Activated CD8-positive, alpha-beta T cell treated with anti-CD3 and anti-CD28 coated beads, Interleukin-2, amount 10 ng/mL, durations not matched to agents 7 days and 5 days (primary cell): ENCODE measurements at regions of chr17 and their contacts with region 1.

Region 1: DNA sequence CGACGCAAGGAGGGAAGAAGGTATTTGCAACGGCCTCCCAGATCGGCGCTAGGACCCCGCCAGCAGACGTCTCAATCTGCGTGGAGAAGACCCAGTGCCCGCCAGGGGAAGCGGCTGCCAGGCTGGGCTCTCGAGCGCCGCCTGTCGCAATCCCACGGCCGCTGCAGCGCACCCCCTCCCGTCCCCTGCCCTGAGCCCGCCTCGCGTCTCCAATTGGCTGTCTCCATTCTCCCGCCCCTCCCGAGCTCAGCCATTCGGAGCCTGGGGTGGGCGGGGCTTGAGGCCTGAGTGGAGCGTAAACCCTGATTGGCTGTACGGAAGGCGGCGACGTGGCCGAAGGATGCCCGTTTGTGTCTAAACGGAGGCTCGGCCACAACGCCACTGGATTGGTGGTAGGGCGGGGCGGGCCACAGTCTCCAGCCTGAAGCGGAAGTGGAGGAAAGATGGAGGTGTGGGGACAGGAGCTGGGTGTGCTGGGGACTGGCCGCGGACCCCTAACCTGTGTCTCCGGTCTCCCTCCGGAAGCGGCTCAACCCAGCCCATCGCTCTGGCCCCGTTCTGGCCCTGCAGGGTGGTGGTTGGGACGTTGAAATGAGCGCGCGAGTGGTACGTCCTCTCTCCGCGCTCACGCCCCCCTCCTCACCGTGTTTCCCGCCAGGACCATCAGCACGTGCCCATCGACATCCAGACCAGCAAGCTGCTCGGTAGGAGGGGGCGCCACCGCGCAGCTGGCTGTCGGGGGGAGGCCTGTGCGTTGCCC is at the start of gene CDK5RAP3:
- DNase-seq: peak; percentile 100
- ATAC-seq: peak; percentile 99
- H3K4me3 Mint-ChIP-seq: peak within 1 kb of the TSS; percentile 92
- H3K27ac Mint-ChIP-seq: peak within 1 kb of the TSS; percentile 91
- H3K4me1 Mint-ChIP-seq: peaks cover 27% of the 10 kb centered on the region
- H3K27me3 Mint-ChIP-seq: no peaks in the 10 kb centered on the region
- total RNA-seq, gene CDK5RAP3: 186 to 196 TPM

Region 2: DNA sequence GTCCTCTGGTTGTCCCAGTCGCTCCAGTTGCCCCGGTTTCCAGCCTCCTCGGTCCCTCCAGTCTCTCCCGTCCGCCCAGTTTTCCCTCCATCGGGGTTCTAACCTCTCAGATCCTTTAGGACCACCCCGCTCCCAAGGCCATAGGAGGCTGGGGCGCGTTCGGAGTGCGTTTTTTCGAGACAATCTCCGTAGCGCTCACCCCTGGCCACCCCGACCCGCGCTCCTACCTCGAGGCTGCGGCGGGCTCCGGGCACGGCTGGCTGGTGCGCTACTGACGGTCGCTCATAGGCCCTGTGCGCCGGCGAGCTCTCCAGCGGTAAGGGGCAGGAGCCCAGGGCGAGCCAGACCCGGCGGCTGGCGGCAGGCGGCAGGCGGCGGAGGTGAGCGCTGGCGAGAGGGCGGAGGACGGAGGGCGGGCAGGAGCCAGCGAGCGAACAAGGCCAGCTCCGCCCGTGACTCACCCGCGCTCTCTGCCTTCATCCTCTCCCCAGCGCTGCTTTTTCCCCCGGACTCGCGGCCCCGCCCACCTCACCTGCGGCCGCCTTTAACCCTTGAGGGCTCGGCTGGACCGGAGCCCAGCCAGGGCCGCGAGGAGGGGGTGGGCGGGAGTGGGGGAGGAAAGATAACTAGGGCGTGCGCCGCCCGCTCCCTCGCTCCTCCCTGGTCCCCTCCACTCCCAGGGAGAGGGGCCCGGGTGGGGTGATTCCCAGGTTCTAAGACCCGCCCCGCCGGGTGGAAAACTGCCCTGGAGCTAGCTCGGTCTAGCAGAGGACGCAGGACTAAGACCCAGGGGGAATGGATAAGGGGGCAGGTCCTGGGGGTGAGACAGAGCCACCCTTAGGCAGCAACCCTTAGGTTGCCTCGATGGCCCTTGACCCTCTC is 120.0 kb before region 1 on chr17 and contains the start of gene SP6:
- CTCF ChIA-PET with region 1: interaction called, 13 read pairs
- POLR2A ChIA-PET with region 1: no interaction called
- DNase-seq: peak; percentile 70
- ATAC-seq: peak; percentile 86
- H3K4me3 Mint-ChIP-seq: peak within 1 kb of the TSS; percentile 27
- H3K27ac Mint-ChIP-seq: no peak within 1 kb of the TSS
- H3K4me1 Mint-ChIP-seq: peaks cover 19% of the 10 kb centered on the region
- H3K27me3 Mint-ChIP-seq: peaks cover 84% of the 10 kb centered on the region
- total RNA-seq, gene SP6: 0.05 TPM in 1 of 2 experiments, not detected in the other

Region 3: GRCh38 chr17:47895856-47896671 is 74.8 kb before region 1 on chr17 and contains the start of gene SP2:
- CTCF ChIA-PET with region 1: interaction called, 14 read pairs
- POLR2A ChIA-PET with region 1: interaction called, 21 read pairs
- DNase-seq: peak; percentile 100
- ATAC-seq: peak; percentile 96
- H3K4me3 Mint-ChIP-seq: peak within 1 kb of the TSS; percentile 97
- H3K27ac Mint-ChIP-seq: peak within 1 kb of the TSS; percentile 95
- H3K4me1 Mint-ChIP-seq: peaks cover 44% of the 10 kb centered on the region
- H3K27me3 Mint-ChIP-seq: no peaks in the 10 kb centered on the region
- total RNA-seq, gene SP2: 23.7 to 24.5 TPM

Region 4: DNA sequence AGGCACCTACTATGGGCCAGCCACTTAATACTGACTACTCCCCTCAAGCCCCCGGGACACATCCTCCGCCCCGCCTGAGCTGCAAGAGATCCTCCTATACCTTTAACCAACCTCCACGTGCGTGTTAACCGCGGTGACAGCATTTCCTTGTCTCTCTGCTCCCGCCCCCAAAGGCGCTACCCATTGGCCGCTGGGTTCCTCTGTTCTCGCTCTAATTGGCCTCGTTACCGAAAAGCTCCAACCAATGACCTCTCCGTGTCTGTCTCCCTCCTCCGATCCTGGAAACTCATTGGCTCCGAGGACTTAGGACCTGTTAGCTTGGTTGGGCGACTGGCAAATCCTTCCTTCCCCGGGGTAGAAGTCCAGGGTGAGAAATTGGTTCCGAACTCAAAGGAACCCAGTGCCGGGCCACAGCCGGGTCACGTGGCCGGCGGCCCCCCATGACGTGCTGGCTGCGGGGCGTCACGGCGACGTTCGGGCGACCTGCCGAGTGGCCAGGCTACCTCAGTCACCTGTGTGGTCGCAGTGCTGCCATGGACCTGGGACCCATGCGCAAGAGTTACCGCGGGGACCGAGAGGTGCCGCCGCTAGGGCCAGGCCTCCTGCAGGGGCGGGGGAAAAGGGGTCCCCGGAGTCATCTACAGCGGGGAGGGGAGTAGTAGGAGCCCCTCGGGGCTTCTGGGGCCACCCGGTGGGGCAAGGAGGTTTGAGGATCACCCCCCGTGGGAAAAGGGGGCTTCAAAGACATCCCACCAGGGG is 29.5 kb before region 1 on chr17 and contains the start of gene PNPO:
- CTCF ChIA-PET with region 1: interaction called, 328 read pairs
- POLR2A ChIA-PET with region 1: interaction called, 5 read pairs
- DNase-seq: peak; percentile 99
- ATAC-seq: peak; percentile 99
- H3K4me3 Mint-ChIP-seq: peak within 1 kb of the TSS; percentile 85
- H3K27ac Mint-ChIP-seq: peak within 1 kb of the TSS; percentile 90
- H3K4me1 Mint-ChIP-seq: peaks cover 52% of the 10 kb centered on the region
- H3K27me3 Mint-ChIP-seq: no peaks in the 10 kb centered on the region
- total RNA-seq, gene PNPO: 37.9 to 44.0 TPM

Region 5: GRCh38 chr17:47957591-47958428 is 13.1 kb before region 1 on chr17 and contains the start of gene PRR15L:
- CTCF ChIA-PET with region 1: interaction called, 52 read pairs
- POLR2A ChIA-PET with region 1: interaction called, 4 read pairs
- DNase-seq: no peak
- ATAC-seq: no peak
- H3K4me3 Mint-ChIP-seq: no peak within 1 kb of the TSS
- H3K27ac Mint-ChIP-seq: no peak within 1 kb of the TSS
- H3K4me1 Mint-ChIP-seq: no peaks in the 10 kb centered on the region
- H3K27me3 Mint-ChIP-seq: no peaks in the 10 kb centered on the region
- total RNA-seq, gene PRR15L: not detected

Region 6: GRCh38 chr17:48011405-48012150 is 40.7 kb after region 1 on chr17:
- CTCF ChIA-PET with region 1: interaction called, 79 read pairs
- POLR2A ChIA-PET with region 1: no interaction called
- DNase-seq: peak; percentile 74
- ATAC-seq: peak; percentile 77
- H3K4me3 Mint-ChIP-seq: peak overlapping the region; percentile 63
- H3K27ac Mint-ChIP-seq: no peak overlapping the region
- H3K4me1 Mint-ChIP-seq: peaks cover 22% of the 10 kb centered on the region
- H3K27me3 Mint-ChIP-seq: peaks cover 44% of the 10 kb centered on the region